Activated CD8-positive, alpha-beta memory T cell treated with anti-CD3 and anti-CD28 coated beads, Interleukin-2, amount 10 ng/mL, durations not matched to agents 7 days and 5 days (primary cell): ENCODE measurements at regions of chr17 and their contacts with region 1.

Region 1: DNA sequence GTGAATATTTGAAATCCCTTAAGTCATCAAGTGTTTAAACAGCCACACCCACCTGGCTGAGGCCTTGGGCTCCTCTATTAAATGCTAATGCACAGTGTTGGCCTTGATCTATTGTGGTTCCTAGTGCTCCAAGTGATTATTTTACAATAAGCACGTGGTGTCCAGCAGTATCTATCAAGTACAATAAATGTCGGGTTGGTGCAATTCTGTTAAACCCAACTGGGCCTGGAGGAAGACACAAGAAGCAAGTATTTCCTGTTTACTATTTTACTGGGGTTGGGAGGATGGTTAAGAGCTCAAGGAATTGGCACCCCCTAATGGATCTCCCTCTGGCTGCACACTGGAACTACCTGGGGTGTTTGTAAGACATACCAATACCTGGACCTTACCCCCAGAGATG is 72.1 kb upstream of the HNF1B start:
- DNase-seq: no peak
- ATAC-seq: no peak
- H3K4me3 Mint-ChIP-seq: no peak overlapping the region
- H3K27ac Mint-ChIP-seq: no peak overlapping the region
- H3K4me1 Mint-ChIP-seq: peaks cover 19% of the 10 kb centered on the region
- H3K27me3 Mint-ChIP-seq: peaks cover 27% of the 10 kb centered on the region

Region 2: DNA sequence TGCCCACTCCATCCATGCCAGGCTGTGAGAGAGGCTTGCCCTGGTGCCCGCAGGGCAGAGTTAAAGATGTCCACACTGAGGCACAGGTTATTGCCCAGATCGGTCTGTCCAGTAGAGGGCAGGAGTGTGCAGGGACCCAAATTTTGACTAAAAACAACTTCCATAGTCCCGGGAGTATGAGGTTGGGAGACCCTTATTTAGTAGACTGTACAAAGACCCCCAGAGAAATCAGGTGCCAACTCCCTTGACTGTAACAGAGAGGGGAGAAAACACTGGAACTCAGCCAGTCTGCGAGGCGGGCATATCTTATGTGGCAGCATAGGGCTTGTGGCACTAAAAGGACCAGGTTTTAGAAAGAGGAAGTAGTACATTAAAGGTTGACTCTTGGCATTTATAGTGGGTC is 115.5 kb before region 1 on chr17:
- CTCF ChIA-PET with region 1: interaction called, 12 read pairs
- DNase-seq: peak; percentile 60
- ATAC-seq: peak; percentile 70
- H3K4me3 Mint-ChIP-seq: no peak overlapping the region
- H3K27ac Mint-ChIP-seq: no peak overlapping the region
- H3K4me1 Mint-ChIP-seq: peaks cover 17% of the 10 kb centered on the region
- H3K27me3 Mint-ChIP-seq: peaks cover 52% of the 10 kb centered on the region

Region 3: GRCh38 chr17:37779554-37779953 is 37.4 kb before region 1 on chr17:
- CTCF ChIA-PET with region 1: no interaction called
- DNase-seq: no peak
- ATAC-seq: no peak
- H3K4me3 Mint-ChIP-seq: no peak overlapping the region
- H3K27ac Mint-ChIP-seq: no peak overlapping the region
- H3K4me1 Mint-ChIP-seq: peaks cover 8% of the 10 kb centered on the region
- H3K27me3 Mint-ChIP-seq: peaks cover 34% of the 10 kb centered on the region